Keratinocyte (primary cell): ENCODE measurements at regions of chr6 and their contacts with region 1.

Region 1: GRCh38 chr6:110873981-110874879 is at the start of gene AMD1:
- DNase-seq: peak; percentile 74
- H3K4me3 ChIP-seq: peak within 1 kb of the TSS; percentile 90 to 94 (median 92)
- H3K27ac ChIP-seq: peak within 1 kb of the TSS; percentile 89
- H3K4me1 ChIP-seq: peaks cover 24% of the 10 kb centered on the region
- H3K27me3 ChIP-seq: no peaks in the 10 kb centered on the region
- CTCF ChIP-seq: no peak
- polyA plus RNA-seq, gene AMD1: 51.4 to 105 TPM (median 90.9 TPM) in 3 replicates

Region 2: GRCh38 chr6:110537208-110538123 is 336.8 kb before region 1 on chr6:
- dilution Hi-C with region 1: loop called (anchors 10 kb)
- DNase-seq: peak; percentile 89
- H3K4me3 ChIP-seq: peak overlapping the region in 1 of 3 experiments; percentile 22
- H3K27ac ChIP-seq: peak overlapping the region; percentile 66
- H3K4me1 ChIP-seq: peaks cover 22% of the 10 kb centered on the region
- H3K27me3 ChIP-seq: no peaks in the 10 kb centered on the region
- CTCF ChIP-seq: no peak

Region 3: DNA sequence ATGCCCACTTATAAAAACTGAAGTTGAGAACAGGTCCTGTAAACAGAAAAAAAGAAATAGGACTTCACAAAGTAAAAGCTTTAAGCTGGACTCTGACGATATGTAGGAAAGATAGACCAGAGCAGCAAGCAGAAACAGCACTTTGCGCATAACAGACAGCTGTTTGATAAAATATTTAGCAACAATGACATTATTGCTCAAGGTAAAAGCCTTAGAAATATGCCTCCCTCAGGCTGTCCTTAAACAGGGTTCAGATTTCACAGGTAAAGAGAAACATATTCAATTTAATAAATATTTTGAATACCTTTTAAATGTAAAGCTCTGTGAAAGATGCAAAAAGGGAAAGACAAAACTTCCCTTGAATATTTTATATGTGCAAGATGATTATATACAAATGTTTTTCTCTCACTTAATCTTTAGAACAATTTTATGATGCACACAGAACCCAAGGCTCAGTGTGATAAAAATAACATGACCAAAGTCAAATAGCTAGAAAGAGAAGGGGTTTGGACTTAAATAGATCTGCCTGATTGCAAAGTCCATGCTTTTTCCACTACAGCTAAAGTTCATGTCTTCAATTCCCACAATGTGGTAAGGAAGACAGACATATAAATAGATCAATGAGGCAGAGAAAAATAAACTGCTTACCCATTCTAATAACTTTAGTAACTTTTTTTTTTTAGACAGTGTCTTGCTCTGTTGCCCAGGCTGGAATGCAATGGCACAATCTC is 202.9 kb before region 1 on chr6:
- dilution Hi-C with region 1: no loop called
- DNase-seq: no peak
- H3K4me3 ChIP-seq: no peak overlapping the region
- H3K27ac ChIP-seq: no peak overlapping the region
- H3K4me1 ChIP-seq: no peaks in the 10 kb centered on the region
- H3K27me3 ChIP-seq: no peaks in the 10 kb centered on the region
- CTCF ChIP-seq: no peak

Region 4: GRCh38 chr6:110690084-110690650 is 184.1 kb before region 1 on chr6:
- dilution Hi-C with region 1: loop called (anchors 10 kb)
- DNase-seq: no peak
- H3K4me3 ChIP-seq: no peak overlapping the region
- H3K27ac ChIP-seq: no peak overlapping the region
- H3K4me1 ChIP-seq: peaks cover 10% of the 10 kb centered on the region
- H3K27me3 ChIP-seq: no peaks in the 10 kb centered on the region
- CTCF ChIP-seq: no peak

Region 5: DNA sequence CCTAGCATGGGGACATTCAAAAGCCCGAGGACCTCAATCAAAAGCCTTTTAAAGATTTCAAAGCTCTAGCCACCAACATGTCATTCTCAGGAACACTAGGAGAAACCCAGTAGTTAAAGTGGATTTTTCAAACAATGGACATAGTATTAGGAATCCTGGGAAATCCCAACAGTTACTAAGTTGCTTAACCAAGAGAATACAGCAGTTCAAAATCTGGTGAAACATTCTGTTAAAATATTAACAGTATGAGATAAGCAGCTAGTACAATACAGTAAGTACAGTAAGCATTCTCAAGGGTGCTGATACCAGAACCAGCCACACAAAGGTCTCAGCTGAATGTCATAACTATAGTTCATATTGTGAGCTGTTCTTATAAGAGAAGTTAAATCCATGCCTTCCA is 127.5 kb before region 1 on chr6:
- dilution Hi-C with region 1: no loop called
- DNase-seq: no peak
- H3K4me3 ChIP-seq: no peak overlapping the region
- H3K27ac ChIP-seq: no peak overlapping the region
- H3K4me1 ChIP-seq: no peaks in the 10 kb centered on the region
- H3K27me3 ChIP-seq: no peaks in the 10 kb centered on the region
- CTCF ChIP-seq: no peak

Region 6: GRCh38 chr6:111291336-111292259 is 417.4 kb after region 1 on chr6:
- dilution Hi-C with region 1: no loop called
- DNase-seq: no peak
- H3K4me3 ChIP-seq: no peak overlapping the region
- H3K27ac ChIP-seq: no peak overlapping the region
- H3K4me1 ChIP-seq: no peaks in the 10 kb centered on the region
- H3K27me3 ChIP-seq: no peaks in the 10 kb centered on the region
- CTCF ChIP-seq: no peak